Body of pancreas (tissue), 4 donors: ENCODE measurements at regions of chr2 and their contacts with region 1.

Region 1: DNA sequence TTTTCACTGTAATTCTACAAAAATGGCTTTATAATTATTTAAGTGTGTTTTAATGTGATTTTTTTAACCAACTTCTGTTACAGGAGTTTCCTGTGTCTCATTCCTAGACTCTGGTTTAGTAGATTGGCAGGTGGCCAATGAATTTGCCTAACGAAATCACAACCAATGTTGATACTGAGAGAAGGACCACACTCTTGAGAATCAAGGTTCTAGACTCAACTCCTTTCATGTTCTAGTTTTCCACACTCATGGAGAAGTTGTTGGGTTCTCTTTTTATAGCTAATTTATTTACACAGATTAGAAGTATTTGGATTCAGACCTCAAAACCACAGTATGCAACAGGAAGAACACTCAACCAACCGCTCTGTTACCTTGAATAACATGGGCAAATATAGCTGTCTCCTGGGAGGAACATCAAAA is 22.6 kb upstream of the USP34 start:
- DNase-seq: no peak
- ATAC-seq: no peak
- H3K4me3 ChIP-seq: no peak overlapping the region
- H3K27ac ChIP-seq: no peak overlapping the region
- H3K4me1 ChIP-seq: no peaks in the 10 kb centered on the region
- H3K27me3 ChIP-seq: no peaks in the 10 kb centered on the region
- CTCF ChIP-seq: no peak
- POLR2A ChIP-seq: no peak

Region 2: GRCh38 chr2:61443342-61444041 is 50.0 kb before region 1 on chr2:
- intact Hi-C with region 1: no loop called
- DNase-seq: no peak
- ATAC-seq: peak; percentile 24
- H3K4me3 ChIP-seq: no peak overlapping the region
- H3K27ac ChIP-seq: no peak overlapping the region
- H3K4me1 ChIP-seq: peaks cover 35% of the 10 kb centered on the region
- H3K27me3 ChIP-seq: no peaks in the 10 kb centered on the region
- CTCF ChIP-seq: no peak
- POLR2A ChIP-seq: no peak

Region 3: GRCh38 chr2:61707969-61708852 is 214.7 kb after region 1 on chr2:
- intact Hi-C with region 1: no loop called
- DNase-seq: peak; percentile 65 to 84 (median 70)
- ATAC-seq: peak; percentile 97
- H3K4me3 ChIP-seq: no peak overlapping the region
- H3K27ac ChIP-seq: peak overlapping the region; percentile 42 to 81 (median 71)
- H3K4me1 ChIP-seq: peaks cover 44% of the 10 kb centered on the region
- H3K27me3 ChIP-seq: no peaks in the 10 kb centered on the region
- CTCF ChIP-seq: no peak
- POLR2A ChIP-seq: peak in 2 of 3 donors; percentile 52 to 64

Region 4: DNA sequence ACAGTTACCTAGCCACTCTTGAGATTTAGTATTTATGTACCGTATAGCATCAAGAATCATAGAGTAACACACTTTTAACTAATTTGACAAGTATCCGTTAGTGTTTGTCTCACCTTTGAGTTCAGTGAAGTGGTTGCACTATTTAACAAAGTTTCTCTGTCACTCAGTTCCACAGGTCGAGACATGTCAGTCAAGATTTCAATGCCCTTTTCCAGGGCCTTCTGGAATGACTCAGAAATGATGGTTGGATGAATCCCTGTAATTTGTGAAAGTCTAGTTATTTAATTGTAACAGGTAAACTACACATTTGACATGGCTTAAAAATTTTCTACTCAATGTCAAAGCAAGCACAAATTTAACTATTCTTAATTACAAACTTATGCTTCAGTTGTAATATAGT is 385.2 kb after region 1 on chr2:
- intact Hi-C with region 1: loop called (anchors 10 kb)
- DNase-seq: no peak
- ATAC-seq: no peak
- H3K4me3 ChIP-seq: no peak overlapping the region
- H3K27ac ChIP-seq: no peak overlapping the region
- H3K4me1 ChIP-seq: no peaks in the 10 kb centered on the region
- H3K27me3 ChIP-seq: no peaks in the 10 kb centered on the region
- CTCF ChIP-seq: no peak
- POLR2A ChIP-seq: no peak